ENCODE measurements at regions of chr14 and their contacts with region 1.

Region 1: DNA sequence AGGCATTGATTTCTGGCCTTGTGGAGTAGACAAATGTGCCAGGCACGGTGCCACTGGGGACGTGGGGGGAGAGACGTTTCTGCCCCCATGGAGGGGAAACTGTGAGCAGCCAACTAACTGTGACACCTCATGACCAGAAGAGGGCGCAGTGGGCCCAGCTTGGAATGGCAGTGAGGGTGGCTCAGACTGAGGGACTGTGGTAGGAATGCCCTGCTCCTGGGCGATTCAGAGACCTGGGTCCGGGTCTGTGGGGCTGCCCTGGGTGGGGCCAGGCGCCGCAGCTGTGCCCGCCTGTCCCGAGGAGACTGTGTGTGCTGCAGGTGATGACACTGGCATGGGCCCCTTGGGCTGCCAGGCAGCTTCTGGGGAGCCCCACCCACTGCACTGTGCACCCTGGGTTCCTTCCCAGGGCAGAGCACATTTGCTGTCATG is 60.6 kb downstream of the SLC25A47 start:
- DNase-seq: peak; percentile 84

Region 2: GRCh38 chr14:100645192-100645990 is 261.6 kb after region 1 on chr14:
- intact Hi-C with region 1: loop called (anchors 2 kb)
- DNase-seq: peak; percentile 88

Region 3: DNA sequence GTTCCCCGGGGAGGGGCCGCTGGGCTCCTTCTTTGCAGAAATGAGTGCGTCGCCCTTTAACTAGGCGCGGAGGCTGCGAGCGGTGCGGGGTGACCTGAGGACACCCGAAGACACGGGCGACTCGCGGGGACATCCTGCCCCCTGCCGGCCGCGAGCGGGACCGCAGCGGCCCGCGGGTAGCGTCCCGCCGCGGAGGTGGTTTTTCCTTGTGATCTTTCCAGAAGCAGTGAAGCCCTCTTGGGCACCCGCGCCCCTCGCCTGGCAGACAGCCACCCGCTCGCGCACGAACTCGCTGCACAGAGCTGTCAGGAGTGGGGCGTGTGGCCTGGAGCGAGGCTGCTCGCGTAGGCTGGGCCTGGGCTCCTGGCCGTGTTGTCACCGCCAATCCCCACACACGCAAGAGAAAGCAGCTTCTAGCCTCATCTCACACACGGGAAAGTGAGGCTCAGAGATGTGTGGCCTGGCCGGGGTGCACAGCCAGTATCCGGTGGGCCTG is 1244.8 kb after region 1 on chr14:
- intact Hi-C with region 1: loop called (anchors 2 kb)
- DNase-seq: peak; percentile 86

Measured in cardiac septum (tissue), 1 donor.